Left ventricle myocardium inferior (tissue), 1 donor: ENCODE measurements at regions of chr19 and their contacts with region 1.

Region 1: GRCh38 chr19:46759817-46760333 is 13.6 kb upstream of the STRN4 start:
- DNase-seq: no peak
- H3K4me3 ChIP-seq: no peak overlapping the region
- H3K27ac ChIP-seq: peak overlapping the region; percentile 21
- H3K4me1 ChIP-seq: peaks cover 19% of the 10 kb centered on the region
- H3K27me3 ChIP-seq: no peaks in the 10 kb centered on the region
- CTCF ChIP-seq: no peak

Region 2: GRCh38 chr19:46840136-46840942 is 80.5 kb after region 1 on chr19:
- intact Hi-C with region 1: loop called (anchors 5 kb)
- DNase-seq: no peak
- H3K4me3 ChIP-seq: no peak overlapping the region
- H3K27ac ChIP-seq: peak overlapping the region; percentile 70
- H3K4me1 ChIP-seq: peaks cover 33% of the 10 kb centered on the region
- H3K27me3 ChIP-seq: no peaks in the 10 kb centered on the region
- CTCF ChIP-seq: peak; percentile 84